ENCODE measurements at regions of chr10 and their contacts with region 1.

Region 1: GRCh38 chr10:29317027-29317420 is 28.2 kb downstream of the LYZL1 start:
- DNase-seq: no peak
- ATAC-seq: no peak
- H3K4me3 ChIP-seq: peak overlapping the region in 1 of 3 experiments; percentile 70; a peak in 1 of 6 replicates
- H3K27ac ChIP-seq: peak overlapping the region; percentile 98
- H3K4me1 ChIP-seq: peaks cover 62% of the 10 kb centered on the region
- H3K27me3 ChIP-seq: no peaks in the 10 kb centered on the region
- CTCF ChIP-seq: no peak
- EP300 ChIP-seq: no peak
- POLR2A ChIP-seq: no peak
- RAD21 ChIP-seq: no peak

Region 2: GRCh38 chr10:28778524-28778923 is 538.5 kb before region 1 on chr10:
- CTCF ChIA-PET with region 1: no interaction called
- POLR2A ChIA-PET with region 1: no interaction called
- in situ Hi-C with region 1: no loop called
- intact Hi-C with region 1: no loop called
- DNase-seq: no peak
- ATAC-seq: no peak
- H3K4me3 ChIP-seq: no peak overlapping the region
- H3K27ac ChIP-seq: no peak overlapping the region
- H3K4me1 ChIP-seq: peaks cover 31% of the 10 kb centered on the region
- H3K27me3 ChIP-seq: no peaks in the 10 kb centered on the region
- CTCF ChIP-seq: no peak
- EP300 ChIP-seq: no peak
- POLR2A ChIP-seq: no peak
- RAD21 ChIP-seq: no peak

Region 3: GRCh38 chr10:28939281-28940157 is 377.5 kb before region 1 on chr10:
- CTCF ChIA-PET with region 1: no interaction called
- POLR2A ChIA-PET with region 1: interaction called, 4 read pairs
- in situ Hi-C with region 1: no loop called
- intact Hi-C with region 1: loop called (anchors 1 kb)
- DNase-seq: peak; percentile 100
- ATAC-seq: peak; percentile 97
- H3K4me3 ChIP-seq: peak overlapping the region; percentile 53 to 80 (median 67)
- H3K27ac ChIP-seq: peak overlapping the region; percentile 99
- H3K4me1 ChIP-seq: peaks cover 56% of the 10 kb centered on the region
- H3K27me3 ChIP-seq: no peaks in the 10 kb centered on the region; a peak in 1 of 5 replicates
- CTCF ChIP-seq: peak; percentile 92
- EP300 ChIP-seq: peak; percentile 99 to 100
- POLR2A ChIP-seq: peak; percentile 66 to 85
- RAD21 ChIP-seq: peak; percentile 60

Region 4: GRCh38 chr10:29328983-29329382 is 12.0 kb after region 1 on chr10:
- CTCF ChIA-PET with region 1: no interaction called
- POLR2A ChIA-PET with region 1: interaction called, 106 read pairs
- in situ Hi-C with region 1: no loop called
- intact Hi-C with region 1: loop called (anchors 1 kb)
- DNase-seq: no peak
- ATAC-seq: no peak
- H3K4me3 ChIP-seq: no peak overlapping the region
- H3K27ac ChIP-seq: peak overlapping the region; percentile 97
- H3K4me1 ChIP-seq: peaks cover 99% of the 10 kb centered on the region
- H3K27me3 ChIP-seq: no peaks in the 10 kb centered on the region
- CTCF ChIP-seq: no peak
- EP300 ChIP-seq: no peak
- POLR2A ChIP-seq: no peak
- RAD21 ChIP-seq: no peak

Region 5: GRCh38 chr10:29392376-29393021 is 75.5 kb after region 1 on chr10:
- CTCF ChIA-PET with region 1: no interaction called
- POLR2A ChIA-PET with region 1: no interaction called
- in situ Hi-C with region 1: no loop called
- intact Hi-C with region 1: loop called (anchors 5 kb)
- DNase-seq: peak; percentile 54
- ATAC-seq: peak; percentile 73
- H3K4me3 ChIP-seq: no peak overlapping the region
- H3K27ac ChIP-seq: no peak overlapping the region
- H3K4me1 ChIP-seq: peaks cover 36% of the 10 kb centered on the region
- H3K27me3 ChIP-seq: 0 out of 5 replicates have a peak, but pooled peaks cover 0 to 1% of the 10 kb centered on the region in 2 experiments
- CTCF ChIP-seq: peak; percentile 75
- EP300 ChIP-seq: no peak
- POLR2A ChIP-seq: no peak
- RAD21 ChIP-seq: 0 out of 2 replicates have a peak, but pooled peaks have one; percentile 17

Region 6: DNA sequence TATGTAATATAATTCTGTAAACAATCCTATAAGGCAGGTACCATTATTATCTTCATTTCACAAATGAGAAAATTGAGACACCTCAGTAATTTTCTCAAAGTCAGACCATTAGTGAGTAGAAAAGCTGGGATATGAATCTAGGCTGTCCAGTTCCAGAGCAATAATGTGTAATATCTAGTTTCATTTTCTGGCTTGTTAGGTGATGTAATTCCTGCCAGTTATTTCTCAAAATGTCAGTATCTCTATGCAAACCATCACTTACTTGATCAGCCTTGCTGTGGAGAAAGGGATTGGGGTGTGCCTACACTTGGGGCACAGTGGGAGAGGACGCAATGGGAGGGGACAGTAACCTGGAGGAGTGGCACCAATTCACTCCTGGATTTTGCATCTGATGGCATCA is 129.3 kb after region 1 on chr10:
- CTCF ChIA-PET with region 1: no interaction called
- POLR2A ChIA-PET with region 1: no interaction called
- in situ Hi-C with region 1: no loop called
- intact Hi-C with region 1: no loop called
- DNase-seq: no peak
- ATAC-seq: no peak
- H3K4me3 ChIP-seq: no peak overlapping the region
- H3K27ac ChIP-seq: no peak overlapping the region
- H3K4me1 ChIP-seq: peaks cover 31% of the 10 kb centered on the region
- H3K27me3 ChIP-seq: no peaks in the 10 kb centered on the region
- CTCF ChIP-seq: no peak
- EP300 ChIP-seq: no peak
- POLR2A ChIP-seq: no peak
- RAD21 ChIP-seq: no peak

Measured in HepG2 (cell line).